MCF 10A (cell line): ENCODE measurements at regions of chr1 and their contacts with region 1.

Region 1: DNA sequence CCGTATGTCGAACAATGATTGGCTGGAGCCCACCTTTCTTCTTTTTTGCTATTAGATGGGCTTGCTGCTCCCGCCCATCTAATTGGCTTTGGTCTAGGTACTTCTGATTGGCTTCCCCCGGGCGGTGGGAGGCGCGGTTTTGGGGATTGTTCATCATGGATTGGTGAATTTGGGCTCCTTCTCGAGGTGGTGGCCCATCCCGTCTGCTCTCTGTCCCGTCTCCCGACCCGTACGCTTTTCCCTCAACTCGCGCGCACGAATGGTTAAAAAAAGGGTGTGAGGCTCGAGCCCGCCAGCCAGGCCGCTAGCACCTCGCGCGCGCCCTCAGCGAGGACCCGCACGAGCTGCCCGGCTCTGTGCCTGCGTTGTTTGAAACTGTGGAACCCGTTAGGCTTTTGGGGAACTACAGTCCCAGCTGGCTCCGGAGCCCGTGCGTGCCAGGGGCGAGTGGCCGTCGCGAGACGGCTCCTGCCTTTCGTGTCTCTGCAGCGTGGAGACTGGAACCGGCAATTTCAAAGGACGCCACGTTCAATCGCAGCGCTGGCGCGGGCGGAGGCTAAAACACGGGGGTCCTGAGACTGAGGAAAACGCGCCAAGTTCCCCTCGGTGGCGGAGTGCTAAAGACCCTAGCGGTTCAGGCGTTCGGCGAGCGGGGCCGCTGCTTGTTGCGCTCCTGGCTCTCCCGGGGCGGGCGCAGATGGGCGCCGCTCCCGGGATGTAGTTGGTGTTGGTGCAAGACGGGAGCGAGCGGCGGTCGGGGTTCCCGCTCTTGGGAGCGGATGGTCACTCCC is at the start of gene USP1:
- DNase-seq: peak; percentile 100
- H3K4me3 Mint-ChIP-seq: peak within 1 kb of the TSS; percentile 69
- H3K27ac Mint-ChIP-seq: peak within 1 kb of the TSS; percentile 100
- H3K4me1 Mint-ChIP-seq: peaks cover 24% of the 10 kb centered on the region
- H3K27me3 Mint-ChIP-seq: no peaks in the 10 kb centered on the region
- CTCF ChIP-seq: no peak
- total RNA-seq, gene USP1: 32.8 and 47.2 TPM in 2 replicates

Region 2: GRCh38 chr1:62424411-62424810 is 12.2 kb before region 1 on chr1:
- CTCF ChIA-PET with region 1: interaction called, 3 read pairs
- POLR2A ChIA-PET with region 1: interaction called, 28 read pairs
- intact Hi-C with region 1: no loop called
- DNase-seq: peak; percentile 22
- H3K4me3 Mint-ChIP-seq: no peak overlapping the region
- H3K27ac Mint-ChIP-seq: no peak overlapping the region
- H3K4me1 Mint-ChIP-seq: peaks cover 12% of the 10 kb centered on the region
- H3K27me3 Mint-ChIP-seq: no peaks in the 10 kb centered on the region
- CTCF ChIP-seq: no peak

Region 3: DNA sequence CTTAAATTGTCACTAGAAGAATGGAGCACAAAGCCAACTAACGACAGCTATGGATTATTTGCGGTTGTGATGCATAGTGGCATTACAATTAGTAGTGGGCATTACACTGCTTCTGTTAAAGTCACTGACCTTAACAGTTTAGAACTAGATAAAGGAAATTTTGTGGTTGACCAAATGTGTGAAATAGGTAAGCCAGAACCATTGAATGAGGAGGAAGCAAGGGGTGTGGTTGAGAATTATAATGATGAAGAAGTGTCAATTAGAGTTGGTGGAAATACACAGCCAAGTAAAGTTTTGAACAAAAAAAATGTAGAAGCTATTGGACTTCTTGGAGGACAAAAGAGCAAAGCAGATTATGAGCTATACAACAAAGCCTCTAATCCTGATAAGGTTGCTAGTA is 13.6 kb after region 1 on chr1:
- CTCF ChIA-PET with region 1: interaction called, 4 read pairs
- POLR2A ChIA-PET with region 1: interaction called, 10 read pairs
- intact Hi-C with region 1: no loop called
- DNase-seq: no peak
- H3K4me3 Mint-ChIP-seq: no peak overlapping the region
- H3K27ac Mint-ChIP-seq: peak overlapping the region; percentile 4
- H3K4me1 Mint-ChIP-seq: no peaks in the 10 kb centered on the region
- H3K27me3 Mint-ChIP-seq: no peaks in the 10 kb centered on the region
- CTCF ChIP-seq: no peak

Region 4: DNA sequence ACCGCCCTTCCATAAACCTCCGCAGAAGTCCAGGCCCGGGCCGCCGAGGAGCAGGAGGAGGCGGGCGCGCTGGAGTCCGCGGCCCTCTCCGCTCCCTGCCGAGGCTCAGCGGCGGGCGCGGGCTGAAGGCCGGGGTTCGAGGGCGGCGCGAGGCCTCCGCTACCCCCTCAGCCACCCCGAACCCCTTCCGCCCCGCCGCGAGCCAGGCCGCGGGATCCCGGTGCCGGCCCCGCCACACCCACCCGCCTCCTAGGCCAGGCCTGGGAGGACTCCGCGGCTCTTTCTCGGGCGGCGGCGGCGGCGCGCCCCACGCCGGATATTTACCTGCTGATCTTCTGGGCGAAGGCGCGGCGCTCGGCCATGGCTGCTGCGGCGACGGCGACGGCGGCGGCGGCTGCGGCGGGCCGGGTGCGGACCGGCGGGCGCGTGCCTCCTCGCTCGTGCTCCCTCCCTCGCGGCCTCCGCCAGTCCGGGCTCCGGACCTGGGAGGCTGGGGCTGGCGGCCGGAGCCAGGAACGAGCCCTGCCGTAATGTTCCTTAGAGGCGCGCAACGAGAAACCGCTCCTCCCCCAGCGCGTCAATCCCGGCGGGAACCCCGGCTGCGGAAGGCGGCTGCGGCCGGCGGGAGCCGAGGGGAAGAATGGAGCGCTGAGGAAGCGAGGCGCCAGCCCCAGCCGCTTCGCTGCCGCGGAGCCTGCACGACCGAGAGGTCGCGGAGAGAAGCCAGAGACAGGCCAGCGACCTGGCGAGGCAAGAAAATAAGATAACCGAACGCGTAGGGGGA is 251.4 kb after region 1 on chr1 and contains the start of gene DOCK7:
- CTCF ChIA-PET with region 1: no interaction called
- POLR2A ChIA-PET with region 1: interaction called, 10 read pairs
- intact Hi-C with region 1: loop called (anchors 5 kb)
- DNase-seq: peak; percentile 82
- H3K4me3 Mint-ChIP-seq: peak within 1 kb of the TSS; percentile 91
- H3K27ac Mint-ChIP-seq: peak within 1 kb of the TSS; percentile 70
- H3K4me1 Mint-ChIP-seq: peaks cover 34% of the 10 kb centered on the region
- H3K27me3 Mint-ChIP-seq: no peaks in the 10 kb centered on the region
- CTCF ChIP-seq: no peak
- total RNA-seq, gene DOCK7: 46.9 and 49.7 TPM in 2 replicates